ENCODE measurements at regions of chr5 and their contacts with region 1.

Region 1: GRCh38 chr5:167049043-167049663 is 1242.3 kb upstream of the WWC1 start:
- DNase-seq: peak; percentile 85
- H3K4me3 Mint-ChIP-seq: no peak overlapping the region
- H3K27ac Mint-ChIP-seq: peak overlapping the region; percentile 14
- H3K4me1 Mint-ChIP-seq: peaks cover 20% of the 10 kb centered on the region
- H3K27me3 Mint-ChIP-seq: no peaks in the 10 kb centered on the region
- CTCF ChIP-seq: peak; percentile 85

Region 2: GRCh38 chr5:165805756-165806155 is 1243.4 kb before region 1 on chr5:
- CTCF ChIA-PET with region 1: no interaction called
- POLR2A ChIA-PET with region 1: no interaction called
- intact Hi-C with region 1: loop called (anchors 10 kb)
- DNase-seq: peak; percentile 47
- H3K4me3 Mint-ChIP-seq: no peak overlapping the region
- H3K27ac Mint-ChIP-seq: no peak overlapping the region
- H3K4me1 Mint-ChIP-seq: no peaks in the 10 kb centered on the region
- H3K27me3 Mint-ChIP-seq: no peaks in the 10 kb centered on the region
- CTCF ChIP-seq: peak; percentile 21

Region 3: DNA sequence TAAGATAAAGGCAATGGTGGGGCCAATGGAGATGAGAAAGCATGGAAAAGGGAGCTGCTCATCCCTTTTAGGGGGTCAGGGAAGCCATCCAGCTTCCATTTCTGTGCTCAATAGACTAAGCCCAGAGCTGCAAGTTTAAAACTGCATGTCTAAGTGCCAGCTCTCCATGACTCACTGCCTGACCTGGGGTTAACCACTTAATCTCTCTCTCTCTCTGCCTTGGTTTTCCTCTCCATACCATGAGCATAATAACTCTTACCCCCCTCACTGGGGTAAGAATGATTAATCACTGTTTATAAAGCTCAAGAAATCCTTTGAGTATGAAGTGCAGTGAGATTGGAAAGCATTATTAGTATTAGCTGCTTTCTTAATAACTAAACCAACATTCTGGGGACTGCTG is 140.1 kb before region 1 on chr5:
- CTCF ChIA-PET with region 1: no interaction called
- POLR2A ChIA-PET with region 1: no interaction called
- intact Hi-C with region 1: loop called (anchors 5 kb)
- DNase-seq: peak; percentile 91
- H3K4me3 Mint-ChIP-seq: no peak overlapping the region
- H3K27ac Mint-ChIP-seq: peak overlapping the region; percentile 30
- H3K4me1 Mint-ChIP-seq: peaks cover 30% of the 10 kb centered on the region
- H3K27me3 Mint-ChIP-seq: no peaks in the 10 kb centered on the region
- CTCF ChIP-seq: no peak

Region 4: GRCh38 chr5:167036585-167036984 is 12.6 kb before region 1 on chr5:
- CTCF ChIA-PET with region 1: interaction called, 16 read pairs
- POLR2A ChIA-PET with region 1: interaction called, 3 read pairs
- intact Hi-C with region 1: no loop called
- DNase-seq: no peak
- H3K4me3 Mint-ChIP-seq: no peak overlapping the region
- H3K27ac Mint-ChIP-seq: no peak overlapping the region
- H3K4me1 Mint-ChIP-seq: no peaks in the 10 kb centered on the region
- H3K27me3 Mint-ChIP-seq: no peaks in the 10 kb centered on the region
- CTCF ChIP-seq: no peak

Region 5: DNA sequence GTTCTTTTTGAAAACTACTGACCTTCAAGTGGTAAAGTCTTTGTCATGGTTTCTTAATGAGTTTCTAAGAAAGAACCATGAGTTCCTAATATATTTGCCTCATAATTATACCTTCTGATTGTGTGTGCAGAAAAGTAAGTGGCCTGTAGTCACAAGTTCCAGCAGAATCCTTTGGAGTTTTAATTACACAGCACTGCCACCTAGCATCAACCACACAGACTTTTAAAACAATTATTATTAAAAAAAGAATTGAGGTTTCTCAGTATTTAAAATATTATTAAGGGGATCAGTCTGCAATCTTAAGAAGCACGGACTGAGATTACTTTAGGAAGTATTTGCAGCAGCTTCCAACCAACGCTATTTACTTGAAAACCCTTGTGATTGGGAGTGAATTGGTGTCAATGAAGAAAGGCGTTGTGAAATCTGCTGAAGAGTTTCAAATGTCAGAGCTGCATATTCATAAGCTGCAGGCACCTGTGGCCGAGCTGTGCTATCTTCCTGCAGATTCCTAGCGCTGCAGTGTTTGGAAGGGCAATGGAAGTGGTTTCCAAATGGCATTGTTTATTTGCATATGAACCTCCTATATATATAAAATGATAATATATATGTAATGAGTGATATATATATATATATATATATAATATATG is 168.1 kb after region 1 on chr5:
- CTCF ChIA-PET with region 1: interaction called, 4 read pairs
- POLR2A ChIA-PET with region 1: no interaction called
- intact Hi-C with region 1: loop called (anchors 5 kb)
- DNase-seq: peak; percentile 27
- H3K4me3 Mint-ChIP-seq: no peak overlapping the region
- H3K27ac Mint-ChIP-seq: no peak overlapping the region
- H3K4me1 Mint-ChIP-seq: no peaks in the 10 kb centered on the region
- H3K27me3 Mint-ChIP-seq: no peaks in the 10 kb centered on the region
- CTCF ChIP-seq: peak; percentile 44

Region 6: GRCh38 chr5:167565032-167565954 is 516.1 kb after region 1 on chr5:
- CTCF ChIA-PET with region 1: interaction called, 13 read pairs
- POLR2A ChIA-PET with region 1: no interaction called
- intact Hi-C with region 1: no loop called
- DNase-seq: peak; percentile 64
- H3K4me3 Mint-ChIP-seq: no peak overlapping the region
- H3K27ac Mint-ChIP-seq: no peak overlapping the region
- H3K4me1 Mint-ChIP-seq: no peaks in the 10 kb centered on the region
- H3K27me3 Mint-ChIP-seq: peaks cover 9% of the 10 kb centered on the region
- CTCF ChIP-seq: peak; percentile 77

Measured in MCF 10A (cell line).